IMR-90 (cell line): ENCODE measurements at regions of chr7 and their contacts with region 1.

Region 1: DNA sequence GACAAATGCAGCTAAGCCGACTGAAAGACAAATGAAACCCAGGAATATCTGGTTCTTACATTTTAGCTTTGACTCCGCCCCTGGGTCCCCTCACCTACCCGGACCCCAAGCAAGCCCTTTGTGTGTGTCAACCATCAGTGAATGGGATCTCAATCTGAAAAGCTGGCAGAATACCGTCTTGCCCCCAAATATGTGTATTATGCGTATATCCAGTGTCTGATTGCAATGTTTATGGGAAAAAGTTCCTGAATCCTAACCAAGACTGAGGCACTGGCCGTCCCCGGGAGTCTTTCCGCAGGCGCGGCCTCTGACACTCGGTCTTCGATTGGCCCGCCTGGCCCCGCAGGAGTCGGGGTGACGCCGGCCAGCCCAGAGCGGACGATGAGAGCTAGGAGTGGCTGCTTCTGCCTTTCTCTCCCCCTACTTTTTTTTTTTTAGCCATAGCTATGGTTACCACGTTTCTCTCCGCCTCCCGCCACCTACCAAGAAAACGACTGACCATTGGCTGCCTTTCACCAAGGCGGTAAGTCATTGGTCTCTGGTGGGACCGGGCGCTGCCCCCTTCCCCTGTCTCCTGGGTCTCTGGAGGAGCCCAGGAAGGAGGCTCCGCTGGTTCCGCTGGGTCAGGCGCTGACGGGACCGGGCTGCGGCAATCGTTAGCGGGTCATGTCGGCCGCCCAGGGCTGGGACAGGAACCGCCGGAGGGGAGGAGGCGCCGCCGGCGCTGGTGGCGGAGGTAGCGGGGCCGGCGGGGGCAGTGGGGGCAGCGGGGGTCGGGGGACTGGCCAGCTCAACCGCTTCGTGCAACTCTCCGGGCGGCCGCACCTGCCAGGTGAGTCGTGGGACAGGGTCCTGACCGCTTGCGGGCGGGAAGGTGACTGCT is at the start of gene KLHDC10:
- DNase-seq: peak; percentile 99
- ATAC-seq: peak; percentile 96
- H3K4me3 ChIP-seq: peak within 1 kb of the TSS; percentile 87
- H3K27ac ChIP-seq: peak within 1 kb of the TSS; percentile 60
- H3K4me1 ChIP-seq: peaks cover 6% of the 10 kb centered on the region
- H3K27me3 ChIP-seq: no peaks in the 10 kb centered on the region
- CTCF ChIP-seq: no peak
- POLR2A ChIP-seq: no peak
- RAD21 ChIP-seq: no peak
- total RNA-seq, gene KLHDC10: 27.1 and 34.2 TPM in 2 replicates

Region 2: GRCh38 chr7:130182990-130183389 is 112.8 kb after region 1 on chr7:
- CTCF ChIA-PET with region 1: no interaction called
- POLR2A ChIA-PET with region 1: no interaction called
- dilution Hi-C with region 1: no loop called
- in situ Hi-C with region 1: no loop called
- intact Hi-C with region 1: loop called (anchors 10 kb)
- DNase-seq: peak; percentile 55
- ATAC-seq: peak; percentile 78
- H3K4me3 ChIP-seq: no peak overlapping the region
- H3K27ac ChIP-seq: no peak overlapping the region
- H3K4me1 ChIP-seq: no peaks in the 10 kb centered on the region
- H3K27me3 ChIP-seq: no peaks in the 10 kb centered on the region
- CTCF ChIP-seq: no peak
- POLR2A ChIP-seq: no peak
- RAD21 ChIP-seq: no peak

Region 3: GRCh38 chr7:130242198-130243014 is 172.2 kb after region 1 on chr7:
- CTCF ChIA-PET with region 1: interaction called, 5 read pairs
- POLR2A ChIA-PET with region 1: no interaction called
- dilution Hi-C with region 1: no loop called
- in situ Hi-C with region 1: no loop called
- intact Hi-C with region 1: loop called (anchors 1 kb)
- DNase-seq: peak; percentile 82
- ATAC-seq: peak; percentile 92
- H3K4me3 ChIP-seq: no peak overlapping the region
- H3K27ac ChIP-seq: no peak overlapping the region
- H3K4me1 ChIP-seq: no peaks in the 10 kb centered on the region
- H3K27me3 ChIP-seq: no peaks in the 10 kb centered on the region
- CTCF ChIP-seq: peak; percentile 64
- POLR2A ChIP-seq: no peak
- RAD21 ChIP-seq: peak; percentile 80

Region 4: GRCh38 chr7:130393101-130393561 is 322.9 kb after region 1 on chr7:
- CTCF ChIA-PET with region 1: interaction called, 3 read pairs
- POLR2A ChIA-PET with region 1: no interaction called
- dilution Hi-C with region 1: no loop called
- in situ Hi-C with region 1: no loop called
- intact Hi-C with region 1: loop called (anchors 10 kb)
- DNase-seq: peak; percentile 80
- ATAC-seq: peak; percentile 78
- H3K4me3 ChIP-seq: no peak overlapping the region
- H3K27ac ChIP-seq: peak overlapping the region; percentile 25; the same call in 1 of the 2 replicates
- H3K4me1 ChIP-seq: peaks cover 6% of the 10 kb centered on the region
- H3K27me3 ChIP-seq: no peaks in the 10 kb centered on the region
- CTCF ChIP-seq: no peak
- POLR2A ChIP-seq: no peak
- RAD21 ChIP-seq: no peak

Region 5: GRCh38 chr7:130491841-130492522 is 421.8 kb after region 1 on chr7 and contains the start of gene MEST:
- CTCF ChIA-PET with region 1: no interaction called
- POLR2A ChIA-PET with region 1: no interaction called
- dilution Hi-C with region 1: no loop called
- in situ Hi-C with region 1: loop called (anchors 10 kb)
- intact Hi-C with region 1: loop called (anchors 2 kb)
- DNase-seq: peak; percentile 47
- ATAC-seq: peak; percentile 61
- H3K4me3 ChIP-seq: peak within 1 kb of the TSS; percentile 71
- H3K27ac ChIP-seq: peak within 1 kb of the TSS; percentile 45
- H3K4me1 ChIP-seq: peaks cover 11% of the 10 kb centered on the region
- H3K27me3 ChIP-seq: no peaks in the 10 kb centered on the region
- CTCF ChIP-seq: no peak
- POLR2A ChIP-seq: 0 out of 2 replicates have a peak, but pooled peaks have one; percentile 22
- RAD21 ChIP-seq: no peak
- total RNA-seq, gene MEST: 231 and 317 TPM in 2 replicates

Region 6: DNA sequence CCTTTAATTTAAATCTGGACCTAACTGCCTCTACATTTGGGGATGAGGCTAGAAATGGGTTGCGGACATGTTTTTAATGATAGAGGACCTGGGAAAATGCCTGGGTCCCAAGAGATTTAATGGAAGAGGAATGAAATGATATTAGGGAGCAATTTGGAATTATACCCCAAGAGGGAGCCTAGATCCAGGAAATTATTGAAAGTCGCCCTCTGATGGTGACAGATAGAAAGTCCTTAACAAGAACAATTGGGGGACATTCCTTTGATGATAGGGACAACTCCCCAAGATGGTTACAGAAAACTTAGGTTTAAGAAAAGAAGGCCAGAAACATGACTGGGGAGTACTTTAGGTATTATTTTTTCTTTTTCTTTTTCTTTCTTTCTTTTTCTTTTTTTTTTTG is 625.6 kb after region 1 on chr7:
- CTCF ChIA-PET with region 1: no interaction called
- POLR2A ChIA-PET with region 1: no interaction called
- dilution Hi-C with region 1: no loop called
- in situ Hi-C with region 1: no loop called
- intact Hi-C with region 1: loop called (anchors 1 kb)
- DNase-seq: peak; percentile 45
- ATAC-seq: peak; percentile 60
- H3K4me3 ChIP-seq: no peak overlapping the region
- H3K27ac ChIP-seq: no peak overlapping the region
- H3K4me1 ChIP-seq: no peaks in the 10 kb centered on the region
- H3K27me3 ChIP-seq: peaks cover 6% of the 10 kb centered on the region
- CTCF ChIP-seq: peak; percentile 81
- POLR2A ChIP-seq: no peak
- RAD21 ChIP-seq: peak; percentile 57

Region 7: DNA sequence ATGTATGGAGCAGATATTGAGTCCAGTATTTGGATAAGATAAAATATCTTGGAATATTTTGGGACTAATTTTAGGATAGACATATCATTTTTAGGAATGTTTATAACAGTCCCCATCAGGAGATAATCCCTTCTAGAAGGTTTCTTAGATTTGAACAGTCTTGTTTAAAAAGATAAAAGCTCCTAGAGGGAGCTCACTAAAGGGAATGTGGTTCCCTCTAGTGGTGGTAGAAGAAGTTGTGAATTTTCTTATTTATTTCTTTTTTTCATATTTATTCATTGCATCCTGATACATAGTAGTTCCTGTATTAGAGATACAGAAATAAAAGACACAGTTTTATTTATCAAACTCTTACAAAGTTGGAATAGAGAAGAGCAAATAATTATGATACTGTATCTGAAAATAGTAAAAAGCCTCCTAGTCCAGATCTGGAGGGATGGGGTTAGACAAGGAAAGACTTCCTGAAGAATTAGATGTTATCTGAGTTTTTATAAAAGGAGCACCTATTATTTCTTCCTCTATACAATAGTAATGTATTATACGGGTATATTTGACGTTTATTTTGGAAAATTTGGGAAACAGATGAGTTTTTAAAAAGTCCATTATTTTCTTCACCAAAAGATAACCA is 688.3 kb after region 1 on chr7:
- CTCF ChIA-PET with region 1: no interaction called
- POLR2A ChIA-PET with region 1: no interaction called
- dilution Hi-C with region 1: no loop called
- in situ Hi-C with region 1: loop called (anchors 10 kb)
- intact Hi-C with region 1: loop called (anchors 1 kb)
- DNase-seq: peak; percentile 69
- ATAC-seq: peak; percentile 82
- H3K4me3 ChIP-seq: no peak overlapping the region
- H3K27ac ChIP-seq: no peak overlapping the region
- H3K4me1 ChIP-seq: no peaks in the 10 kb centered on the region
- H3K27me3 ChIP-seq: peaks cover 20% of the 10 kb centered on the region
- CTCF ChIP-seq: peak; percentile 77
- POLR2A ChIP-seq: no peak
- RAD21 ChIP-seq: peak; percentile 78